Heart right ventricle (tissue), 16 donors: ENCODE measurements at regions of chr3 and their contacts with region 1.

Region 1: GRCh38 chr3:140375002-140375401 is 302.9 kb upstream of the TRIM42 start:
- DNase-seq: no peak
- ATAC-seq: no peak
- H3K4me3 ChIP-seq: no peak overlapping the region
- H3K27ac ChIP-seq: no peak overlapping the region
- H3K4me1 ChIP-seq: no peaks in the 10 kb centered on the region
- H3K27me3 ChIP-seq: no peaks in the 10 kb centered on the region
- CTCF ChIP-seq: no peak

Region 2: DNA sequence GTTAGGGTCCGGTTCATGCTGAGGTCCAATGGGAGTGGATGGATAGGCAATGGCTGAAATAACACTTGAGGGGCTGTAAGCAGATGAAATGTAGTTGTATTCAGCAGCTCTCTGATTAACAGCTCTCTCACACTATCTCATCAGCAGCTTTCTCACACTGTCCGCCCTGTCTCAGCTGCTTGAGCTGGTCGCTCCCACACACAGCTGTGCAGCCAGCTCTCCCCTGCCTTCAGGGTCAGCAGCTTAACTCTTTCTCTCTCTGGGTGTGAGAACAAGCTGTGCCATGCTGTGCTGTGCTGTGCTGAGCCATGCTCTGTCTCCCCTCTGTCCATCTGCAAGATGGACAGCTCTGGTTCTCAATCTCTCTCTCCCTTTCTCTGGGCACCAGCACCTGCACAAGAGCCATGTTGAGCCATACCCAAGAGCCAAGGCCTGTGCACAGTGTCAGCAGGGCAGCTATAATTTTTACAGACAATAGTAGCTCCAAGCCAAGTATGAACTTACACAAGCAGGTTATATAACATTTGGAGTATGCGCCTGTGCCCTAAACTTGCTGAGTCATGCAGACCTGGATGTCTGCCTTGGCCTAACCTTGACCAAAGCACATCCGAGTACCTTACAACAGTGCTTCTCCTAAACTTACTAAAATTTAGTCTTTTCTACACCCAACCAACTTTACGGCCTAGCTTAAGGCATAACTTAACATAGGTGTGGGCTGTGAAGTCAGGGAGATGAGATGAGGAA is 11.5 kb after region 1 on chr3:
- intact Hi-C with region 1: loop called in 1 of 10 experiments (anchors 1 kb)
- DNase-seq: no peak
- ATAC-seq: peak in 6 of 8 donors; percentile 45 to 70 (median 62)
- H3K4me3 ChIP-seq: no peak overlapping the region
- H3K27ac ChIP-seq: no peak overlapping the region
- H3K4me1 ChIP-seq: peaks cover 0 to 14% (median 0%) of the 10 kb centered on the region in 9 donors
- H3K27me3 ChIP-seq: peaks cover 0 to 4% (median 0%) of the 10 kb centered on the region in 7 donors
- CTCF ChIP-seq: no peak